CD4-positive, alpha-beta T cell (primary cell): ENCODE measurements at regions of chr5 and their contacts with region 1.

Region 1: GRCh38 chr5:133119233-133119711 is 67.5 kb downstream of the HSPA4 start:
- DNase-seq: no peak
- ATAC-seq: no peak
- H3K4me3 ChIP-seq: no peak overlapping the region
- H3K4me3 Mint-ChIP-seq: no peak overlapping the region
- H3K27ac ChIP-seq: no peak overlapping the region
- H3K27ac Mint-ChIP-seq: no peak overlapping the region
- H3K4me1 ChIP-seq: no peaks in the 10 kb centered on the region
- H3K4me1 Mint-ChIP-seq: no peaks in the 10 kb centered on the region
- H3K27me3 ChIP-seq: no peaks in the 10 kb centered on the region
- H3K27me3 Mint-ChIP-seq: no peaks in the 10 kb centered on the region
- CTCF ChIP-seq: no peak

Region 2: GRCh38 chr5:133086366-133086875 is 32.9 kb before region 1 on chr5:
- CTCF ChIA-PET with region 1: no interaction called
- POLR2A ChIA-PET with region 1: no interaction called
- intact Hi-C with region 1: no loop called
- DNase-seq: no peak
- ATAC-seq: no peak
- H3K4me3 ChIP-seq: no peak overlapping the region
- H3K4me3 Mint-ChIP-seq: no peak overlapping the region
- H3K27ac ChIP-seq: no peak overlapping the region
- H3K27ac Mint-ChIP-seq: no peak overlapping the region
- H3K4me1 ChIP-seq: no peaks in the 10 kb centered on the region
- H3K4me1 Mint-ChIP-seq: peaks cover 5% of the 10 kb centered on the region
- H3K27me3 ChIP-seq: no peaks in the 10 kb centered on the region
- H3K27me3 Mint-ChIP-seq: no peaks in the 10 kb centered on the region
- CTCF ChIP-seq: no peak

Region 3: GRCh38 chr5:133193794-133194193 is 74.5 kb after region 1 on chr5:
- CTCF ChIA-PET with region 1: no interaction called
- POLR2A ChIA-PET with region 1: no interaction called
- intact Hi-C with region 1: loop called (anchors 2 to 5 kb)
- DNase-seq: no peak
- ATAC-seq: no peak
- H3K4me3 ChIP-seq: no peak overlapping the region
- H3K4me3 Mint-ChIP-seq: no peak overlapping the region
- H3K27ac ChIP-seq: no peak overlapping the region
- H3K27ac Mint-ChIP-seq: no peak overlapping the region
- H3K4me1 ChIP-seq: peaks cover 4% of the 10 kb centered on the region
- H3K4me1 Mint-ChIP-seq: no peaks in the 10 kb centered on the region
- H3K27me3 ChIP-seq: no peaks in the 10 kb centered on the region
- H3K27me3 Mint-ChIP-seq: no peaks in the 10 kb centered on the region
- CTCF ChIP-seq: no peak

Region 4: GRCh38 chr5:133460172-133460758 is 341.0 kb after region 1 on chr5:
- CTCF ChIA-PET with region 1: no interaction called
- POLR2A ChIA-PET with region 1: no interaction called
- intact Hi-C with region 1: loop called (anchors 5 kb)
- DNase-seq: peak in 5 of 14 experiments; percentile 5 to 38 (median 28)
- ATAC-seq: no peak
- H3K4me3 ChIP-seq: no peak overlapping the region
- H3K4me3 Mint-ChIP-seq: no peak overlapping the region
- H3K27ac ChIP-seq: no peak overlapping the region
- H3K27ac Mint-ChIP-seq: no peak overlapping the region
- H3K4me1 ChIP-seq: peaks cover 14% of the 10 kb centered on the region
- H3K4me1 Mint-ChIP-seq: peaks cover 4% of the 10 kb centered on the region
- H3K27me3 ChIP-seq: no peaks in the 10 kb centered on the region
- H3K27me3 Mint-ChIP-seq: no peaks in the 10 kb centered on the region
- CTCF ChIP-seq: peak; percentile 16